ENCODE measurements at regions of chr1 and their contacts with region 1.

Region 1: GRCh38 chr1:160837558-160838205 is 25.0 kb downstream of the CD244 start:
- DNase-seq: peak; percentile 73
- CTCF ChIP-seq: peak; percentile 41

Region 2: GRCh38 chr1:160726498-160727315 is 111.0 kb before region 1 on chr1:
- CTCF ChIA-PET with region 1: interaction called, 12 read pairs
- POLR2A ChIA-PET with region 1: no interaction called
- DNase-seq: peak; percentile 62
- CTCF ChIP-seq: peak; percentile 80

Region 3: DNA sequence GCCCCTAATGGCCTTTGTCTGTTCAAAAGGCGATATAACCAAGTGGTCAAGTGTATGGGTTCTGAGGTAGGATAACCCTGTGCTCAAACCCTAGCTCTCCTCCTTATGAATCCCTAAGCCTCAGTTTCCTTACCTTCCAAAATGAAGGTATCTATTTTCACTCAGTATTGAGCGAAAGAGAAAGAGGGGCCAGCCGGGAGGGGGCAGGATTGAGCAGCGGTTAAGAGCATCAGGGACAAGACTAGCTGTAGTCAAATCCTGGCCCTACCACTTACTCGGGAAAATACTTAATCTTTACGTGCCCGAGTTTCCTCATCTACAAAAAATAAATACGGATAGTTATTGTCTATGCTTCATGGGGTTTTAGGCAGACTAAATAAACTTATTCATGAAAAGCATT is 16.1 kb before region 1 on chr1:
- CTCF ChIA-PET with region 1: interaction called, 28 read pairs
- POLR2A ChIA-PET with region 1: no interaction called
- DNase-seq: no peak
- CTCF ChIP-seq: no peak

Region 4: GRCh38 chr1:160862203-160863060 is 24.8 kb after region 1 on chr1 and contains the start of gene CD244:
- CTCF ChIA-PET with region 1: interaction called, 38 read pairs
- POLR2A ChIA-PET with region 1: no interaction called
- DNase-seq: peak; percentile 81
- CTCF ChIP-seq: no peak

Region 5: DNA sequence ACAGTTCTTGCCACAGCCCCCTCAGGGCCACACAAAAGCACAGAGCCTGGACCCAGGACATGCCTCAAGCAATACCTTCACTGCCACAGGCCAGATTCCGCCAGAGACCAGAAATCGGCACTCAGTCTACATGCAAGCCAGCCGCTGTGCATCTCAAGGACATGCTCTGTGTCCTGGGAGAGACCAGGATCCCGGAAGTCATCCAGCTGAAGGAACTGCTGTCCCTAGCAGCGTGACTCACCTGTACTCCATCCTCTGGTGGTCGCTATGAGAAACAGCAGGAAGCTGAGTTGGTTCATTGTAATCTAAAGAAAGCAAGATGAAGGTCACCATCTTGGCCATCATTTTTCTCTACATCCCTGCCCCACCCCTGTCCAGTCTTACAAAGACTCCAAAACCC is 46.9 kb after region 1 on chr1:
- CTCF ChIA-PET with region 1: interaction called, 19 read pairs
- POLR2A ChIA-PET with region 1: no interaction called
- DNase-seq: no peak
- CTCF ChIP-seq: no peak

Measured in GM10248 (cell line).